H1 (cell line): ENCODE measurements at regions of chr16 and their contacts with region 1.

Region 1: GRCh38 chr16:6146874-6147425 is 1049.4 kb upstream of the EEF2KMT start:
- DNase-seq: peak; percentile 31 to 75
- H3K4me3 ChIP-seq: no peak overlapping the region
- H3K27ac ChIP-seq: no peak overlapping the region
- H3K4me1 ChIP-seq: peaks cover 0 to 8% (median 2%) of the 10 kb centered on the region in 4 experiments; a peak in 2 of 7 replicates
- H3K27me3 ChIP-seq: no peaks in the 10 kb centered on the region
- CTCF ChIP-seq: peak; percentile 36 to 97 (median 81)
- EP300 ChIP-seq: no peak
- POLR2A ChIP-seq: no peak
- RAD21 ChIP-seq: peak; percentile 96 to 98

Region 2: DNA sequence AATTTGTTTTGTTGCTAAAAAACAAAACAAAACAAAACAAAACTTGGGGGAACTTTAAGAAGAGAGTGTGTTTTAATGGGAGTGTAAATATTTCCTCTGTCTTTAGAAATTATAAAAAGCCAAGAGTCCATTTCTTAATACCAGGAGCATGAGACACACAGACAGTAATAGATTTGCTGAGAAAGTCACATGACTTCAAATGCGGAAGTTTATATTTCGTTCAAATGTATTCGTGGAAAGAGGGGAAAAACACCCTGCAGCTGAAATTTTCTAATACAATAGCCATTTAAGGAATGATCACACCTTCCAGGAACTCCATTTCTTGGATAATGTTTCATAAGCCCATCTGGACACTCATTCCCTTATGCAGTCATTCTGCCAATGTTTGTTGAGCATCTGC is 142.0 kb before region 1 on chr16:
- CTCF ChIA-PET with region 1: no interaction called
- POLR2A ChIA-PET with region 1: no interaction called
- DNase-seq: no peak
- H3K4me3 ChIP-seq: no peak overlapping the region
- H3K27ac ChIP-seq: no peak overlapping the region
- H3K4me1 ChIP-seq: 0 out of 7 replicates have a peak, but pooled peaks cover 0 to 2% (median 0%) of the 10 kb centered on the region in 4 experiments
- H3K27me3 ChIP-seq: no peaks in the 10 kb centered on the region
- CTCF ChIP-seq: no peak
- EP300 ChIP-seq: no peak
- POLR2A ChIP-seq: no peak
- RAD21 ChIP-seq: no peak

Region 3: DNA sequence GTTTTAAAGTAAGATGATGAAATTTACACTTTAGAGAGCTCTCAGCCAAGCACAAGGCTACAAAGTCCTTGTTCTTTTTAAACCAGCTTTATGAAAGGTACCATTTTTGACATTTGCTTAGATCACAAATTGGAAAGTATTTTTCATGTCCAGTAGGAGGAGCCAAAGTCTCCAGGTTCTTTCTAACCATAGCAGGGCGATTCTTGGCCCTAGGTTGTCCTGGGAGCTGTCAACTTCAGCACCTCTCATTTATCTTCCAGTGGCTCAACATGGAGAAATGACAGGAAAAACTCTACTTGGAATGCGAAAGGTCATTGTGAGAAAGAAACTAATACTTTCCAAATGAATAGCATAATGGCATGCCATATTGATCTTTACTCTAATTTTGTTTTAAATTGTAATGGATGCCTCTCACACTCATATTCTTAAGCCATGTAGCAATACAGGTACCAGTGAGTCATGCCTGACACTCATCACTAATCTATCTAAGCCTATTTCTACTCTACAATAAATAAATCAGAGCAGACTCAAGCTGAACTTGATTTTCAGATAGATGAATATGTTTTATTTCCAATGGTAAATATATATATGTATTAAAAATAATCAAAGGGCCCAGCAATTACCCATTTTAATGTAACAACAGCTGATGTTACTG is 130.3 kb before region 1 on chr16:
- CTCF ChIA-PET with region 1: interaction called, 17 read pairs
- POLR2A ChIA-PET with region 1: no interaction called
- DNase-seq: no peak
- H3K4me3 ChIP-seq: no peak overlapping the region
- H3K27ac ChIP-seq: no peak overlapping the region
- H3K4me1 ChIP-seq: peaks cover 0 to 4% (median under 1%) of the 10 kb centered on the region in 4 experiments; a peak in 3 of 7 replicates
- H3K27me3 ChIP-seq: peaks cover 20 to 40% (median 36%) of the 10 kb centered on the region in 4 experiments
- CTCF ChIP-seq: peak in 2 of 3 experiments; percentile 69 to 74; a peak in 3 of 4 replicates
- EP300 ChIP-seq: no peak
- POLR2A ChIP-seq: no peak
- RAD21 ChIP-seq: peak; percentile 77 to 85

Region 4: DNA sequence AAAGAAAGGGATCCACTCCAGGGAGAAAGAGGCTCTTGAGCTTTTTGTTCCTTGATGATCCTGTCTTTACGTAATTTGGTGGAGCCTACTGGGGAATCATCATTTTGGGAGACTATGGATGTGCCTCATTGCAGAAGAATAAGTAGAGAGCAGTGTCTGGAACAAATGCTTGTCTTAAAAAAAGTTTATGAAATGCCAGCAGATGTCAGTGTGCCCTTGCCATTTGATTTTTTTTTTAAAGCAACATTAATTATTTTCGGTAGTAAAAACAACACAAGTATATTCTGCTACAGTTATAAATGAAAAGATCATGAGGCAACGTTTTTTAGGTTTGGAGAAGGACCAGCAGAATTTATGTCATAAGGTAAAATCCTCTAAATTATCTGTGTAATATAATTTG is 114.5 kb before region 1 on chr16:
- CTCF ChIA-PET with region 1: interaction called, 15 read pairs
- POLR2A ChIA-PET with region 1: no interaction called
- DNase-seq: no peak
- H3K4me3 ChIP-seq: no peak overlapping the region
- H3K27ac ChIP-seq: no peak overlapping the region
- H3K4me1 ChIP-seq: no peaks in the 10 kb centered on the region
- H3K27me3 ChIP-seq: no peaks in the 10 kb centered on the region
- CTCF ChIP-seq: no peak
- EP300 ChIP-seq: no peak
- POLR2A ChIP-seq: no peak
- RAD21 ChIP-seq: peak; percentile 30 to 33

Region 5: DNA sequence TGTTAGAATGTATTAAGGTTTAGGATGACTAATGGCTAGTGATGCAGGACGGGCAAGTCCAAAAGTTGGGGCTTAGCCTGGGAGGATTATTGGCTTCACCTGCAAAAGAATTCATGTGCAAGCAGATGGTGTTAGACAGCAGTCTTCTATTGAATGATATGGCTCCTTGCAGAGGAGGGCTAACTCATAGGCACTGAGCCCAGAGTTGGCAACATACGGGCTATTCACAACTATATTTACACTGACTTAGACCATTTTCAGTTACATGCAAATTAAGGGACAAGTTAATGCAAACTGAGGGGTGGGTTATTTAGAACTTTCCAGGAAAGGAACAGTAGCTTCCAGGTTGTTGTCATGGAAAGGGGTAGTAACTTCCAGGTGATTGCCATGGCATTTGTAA is 32.3 kb before region 1 on chr16:
- CTCF ChIA-PET with region 1: no interaction called
- POLR2A ChIA-PET with region 1: no interaction called
- DNase-seq: no peak
- H3K4me3 ChIP-seq: no peak overlapping the region
- H3K27ac ChIP-seq: no peak overlapping the region
- H3K4me1 ChIP-seq: peaks cover 0 to 9% (median 3%) of the 10 kb centered on the region in 4 experiments; a peak in 2 of 7 replicates
- H3K27me3 ChIP-seq: no peaks in the 10 kb centered on the region
- CTCF ChIP-seq: no peak
- EP300 ChIP-seq: no peak
- POLR2A ChIP-seq: no peak
- RAD21 ChIP-seq: no peak

Region 6: DNA sequence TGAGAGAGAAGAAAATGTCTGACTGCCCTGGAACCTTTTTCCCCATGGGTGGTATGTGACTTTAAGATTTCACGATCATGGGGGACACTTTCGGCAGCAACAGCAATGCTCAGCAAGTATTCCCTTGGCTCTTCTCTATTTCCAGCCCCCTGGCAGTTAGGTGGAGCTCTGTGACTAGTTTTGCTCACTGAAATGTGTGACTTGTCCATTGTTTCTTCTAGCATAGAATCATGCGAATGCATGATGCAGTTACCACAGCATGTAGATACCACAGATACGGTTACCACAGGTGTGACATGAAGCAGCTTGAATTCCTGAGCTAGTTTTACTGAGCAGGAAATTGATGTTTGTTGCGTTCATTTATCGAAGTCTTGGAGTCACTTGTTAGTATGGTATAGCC is 14.8 kb before region 1 on chr16:
- CTCF ChIA-PET with region 1: interaction called, 21 read pairs
- POLR2A ChIA-PET with region 1: no interaction called
- DNase-seq: no peak
- H3K4me3 ChIP-seq: no peak overlapping the region
- H3K27ac ChIP-seq: no peak overlapping the region
- H3K4me1 ChIP-seq: no peaks in the 10 kb centered on the region
- H3K27me3 ChIP-seq: no peaks in the 10 kb centered on the region
- CTCF ChIP-seq: no peak
- EP300 ChIP-seq: no peak
- POLR2A ChIP-seq: no peak
- RAD21 ChIP-seq: peak in 1 of 2 experiments; percentile 24; a peak in 1 of 4 replicates

Region 7: DNA sequence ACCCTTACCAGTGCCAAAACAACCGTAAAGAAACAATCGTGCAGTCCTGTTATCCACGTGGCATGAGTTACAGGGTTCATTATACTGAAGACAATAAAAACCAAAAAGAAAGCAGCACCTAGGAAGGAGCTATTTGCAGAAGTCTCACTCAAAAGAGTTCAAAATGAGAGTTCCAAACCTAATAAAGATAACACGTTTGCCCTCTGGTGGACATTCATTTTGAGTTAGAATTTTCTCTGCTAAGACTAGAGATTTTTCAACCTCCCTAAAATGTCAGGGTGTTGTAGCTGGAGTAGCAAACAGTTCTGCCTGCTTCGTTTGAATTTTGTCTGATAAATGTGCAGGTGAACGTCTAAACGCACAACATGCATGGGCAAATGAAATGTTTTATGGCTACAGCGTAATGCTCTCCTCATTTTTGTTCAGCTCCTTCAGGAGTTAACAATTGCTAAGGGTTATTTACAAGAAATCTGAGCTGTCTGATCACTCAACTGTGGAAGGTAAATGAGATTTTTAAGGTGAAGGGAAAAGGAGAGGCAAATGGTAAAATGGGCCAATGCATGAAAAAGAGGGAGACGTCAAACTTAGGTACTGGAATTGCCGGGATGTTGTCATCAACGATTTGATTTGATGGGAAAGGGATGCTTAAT is 18.5 kb after region 1 on chr16:
- CTCF ChIA-PET with region 1: interaction called, 11 read pairs
- POLR2A ChIA-PET with region 1: no interaction called
- DNase-seq: no peak
- H3K4me3 ChIP-seq: no peak overlapping the region
- H3K27ac ChIP-seq: no peak overlapping the region
- H3K4me1 ChIP-seq: peaks cover 0 to 8% (median 7%) of the 10 kb centered on the region in 4 experiments; a peak in 5 of 7 replicates
- H3K27me3 ChIP-seq: no peaks in the 10 kb centered on the region
- CTCF ChIP-seq: peak in 1 of 3 experiments; percentile 26; a peak in 2 of 4 replicates
- EP300 ChIP-seq: no peak
- POLR2A ChIP-seq: no peak
- RAD21 ChIP-seq: peak; percentile 28 to 45; a peak in 3 of 4 replicates

Region 8: DNA sequence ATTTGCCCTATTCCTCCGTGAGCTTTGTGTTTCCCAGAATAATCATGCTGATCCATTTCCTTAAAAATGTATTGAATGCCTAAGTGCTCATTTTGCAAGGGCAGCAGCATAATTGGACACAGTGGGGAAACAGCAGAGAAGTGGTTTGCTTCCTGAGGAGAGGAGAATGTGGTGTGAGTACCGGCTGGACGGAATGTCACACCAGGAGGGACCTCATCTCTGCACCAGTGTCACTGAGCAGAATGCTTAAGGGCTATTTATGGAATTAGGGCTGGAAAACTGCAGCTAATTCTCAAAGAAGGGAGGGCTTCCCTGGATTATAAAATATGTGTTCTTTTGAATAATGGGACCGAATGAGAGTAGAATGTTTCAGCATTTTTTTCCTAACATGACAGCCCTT is 85.1 kb after region 1 on chr16:
- CTCF ChIA-PET with region 1: no interaction called
- POLR2A ChIA-PET with region 1: no interaction called
- DNase-seq: no peak
- H3K4me3 ChIP-seq: no peak overlapping the region
- H3K27ac ChIP-seq: no peak overlapping the region
- H3K4me1 ChIP-seq: no peaks in the 10 kb centered on the region; a peak in 1 of 7 replicates
- H3K27me3 ChIP-seq: no peaks in the 10 kb centered on the region
- CTCF ChIP-seq: no peak
- EP300 ChIP-seq: no peak
- POLR2A ChIP-seq: no peak
- RAD21 ChIP-seq: no peak

Region 9: GRCh38 chr16:6265968-6266367 is 119.0 kb after region 1 on chr16:
- CTCF ChIA-PET with region 1: no interaction called
- POLR2A ChIA-PET with region 1: no interaction called
- DNase-seq: no peak
- H3K4me3 ChIP-seq: no peak overlapping the region
- H3K27ac ChIP-seq: no peak overlapping the region
- H3K4me1 ChIP-seq: peaks cover 0 to 5% (median 1%) of the 10 kb centered on the region in 4 experiments; a peak in 2 of 7 replicates
- H3K27me3 ChIP-seq: no peaks in the 10 kb centered on the region
- CTCF ChIP-seq: no peak
- EP300 ChIP-seq: no peak
- POLR2A ChIP-seq: no peak
- RAD21 ChIP-seq: no peak